Endothelial cell of umbilical vein (primary cell): ENCODE measurements at regions of chr2 and their contacts with region 1.

Region 1: DNA sequence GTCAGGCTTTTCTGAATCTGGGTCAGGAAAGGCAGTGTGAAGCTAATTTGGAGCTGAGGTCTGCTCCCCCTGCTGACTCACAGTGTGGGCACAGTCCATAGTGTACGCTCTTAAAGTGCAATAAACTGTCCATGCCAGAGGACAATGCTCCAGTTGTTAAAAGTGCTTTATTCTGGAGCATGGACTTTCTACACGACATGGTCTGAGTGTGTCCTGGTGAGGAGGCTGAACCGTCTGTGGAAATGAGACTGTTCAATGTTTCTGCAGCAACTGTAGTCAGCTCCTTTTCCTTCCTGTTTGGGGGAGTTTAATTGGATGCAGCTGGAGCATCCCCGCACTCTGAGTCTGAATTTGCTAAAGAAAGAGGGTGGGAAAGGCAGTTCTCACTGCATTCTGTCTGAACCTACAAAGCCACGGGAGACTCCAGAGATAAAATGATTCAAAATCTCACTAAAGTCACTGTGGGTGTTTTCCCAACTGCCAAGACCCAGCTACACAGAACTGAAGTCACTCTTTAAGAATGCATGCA is 110.2 kb upstream of the TRIB2 start:
- DNase-seq: peak; percentile 8
- H3K4me3 ChIP-seq: no peak overlapping the region
- H3K27ac ChIP-seq: no peak overlapping the region
- H3K4me1 ChIP-seq: no peaks in the 10 kb centered on the region
- H3K27me3 ChIP-seq: peaks cover 0 to 1% of the 10 kb centered on the region in 2 experiments
- CTCF ChIP-seq: no peak
- POLR2A ChIP-seq: no peak

Region 2: GRCh38 chr2:12577567-12578253 is 28.8 kb before region 1 on chr2:
- CTCF ChIA-PET with region 1: no interaction called
- POLR2A ChIA-PET with region 1: no interaction called
- dilution Hi-C with region 1: no loop called
- intact Hi-C with region 1: no loop called
- DNase-seq: no peak
- H3K4me3 ChIP-seq: no peak overlapping the region
- H3K27ac ChIP-seq: no peak overlapping the region
- H3K4me1 ChIP-seq: no peaks in the 10 kb centered on the region
- H3K27me3 ChIP-seq: no peaks in the 10 kb centered on the region
- CTCF ChIP-seq: no peak
- POLR2A ChIP-seq: no peak

Region 3: DNA sequence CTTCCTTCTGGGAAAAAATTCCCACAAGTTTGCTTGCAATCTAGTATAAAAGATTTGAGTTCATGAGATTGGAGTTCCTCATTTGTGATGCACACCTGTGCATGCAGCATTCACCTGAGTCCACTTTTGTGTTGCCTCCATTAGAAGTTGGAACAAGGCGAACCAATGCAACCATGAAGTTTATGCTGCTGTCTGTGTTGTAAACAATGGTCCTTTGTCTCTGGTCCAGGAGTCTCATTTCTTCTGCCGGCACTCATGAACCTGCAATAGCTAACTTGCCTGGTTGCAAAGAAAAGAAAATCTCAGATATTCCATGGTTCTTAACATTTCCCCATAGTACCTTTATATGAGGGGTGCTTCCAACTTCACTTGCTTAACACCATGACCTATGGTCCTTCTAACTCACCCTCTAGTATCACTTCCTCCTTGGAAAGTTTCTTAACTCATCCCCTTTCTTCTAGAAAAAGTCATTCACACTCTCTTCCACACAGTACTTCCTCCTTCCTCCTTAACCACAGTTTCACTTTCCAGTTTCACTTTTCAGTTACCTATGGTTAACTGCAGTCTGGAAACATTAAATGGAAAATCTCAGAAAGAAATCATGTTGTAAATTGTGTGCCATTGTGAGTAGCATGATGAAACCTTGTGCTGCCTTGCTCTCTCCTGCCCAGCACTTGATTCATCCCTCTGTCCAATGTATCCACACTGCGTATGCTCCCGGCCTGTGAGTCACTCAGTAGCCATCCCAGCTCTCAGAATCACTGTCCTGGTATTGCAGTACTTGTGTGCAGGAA is 18.6 kb before region 1 on chr2:
- CTCF ChIA-PET with region 1: interaction called, 3 read pairs
- POLR2A ChIA-PET with region 1: no interaction called
- dilution Hi-C with region 1: no loop called
- intact Hi-C with region 1: loop called (anchors 2 kb)
- DNase-seq: peak; percentile 22
- H3K4me3 ChIP-seq: no peak overlapping the region
- H3K27ac ChIP-seq: no peak overlapping the region
- H3K4me1 ChIP-seq: no peaks in the 10 kb centered on the region
- H3K27me3 ChIP-seq: no peaks in the 10 kb centered on the region
- CTCF ChIP-seq: no peak
- POLR2A ChIP-seq: no peak

Region 4: DNA sequence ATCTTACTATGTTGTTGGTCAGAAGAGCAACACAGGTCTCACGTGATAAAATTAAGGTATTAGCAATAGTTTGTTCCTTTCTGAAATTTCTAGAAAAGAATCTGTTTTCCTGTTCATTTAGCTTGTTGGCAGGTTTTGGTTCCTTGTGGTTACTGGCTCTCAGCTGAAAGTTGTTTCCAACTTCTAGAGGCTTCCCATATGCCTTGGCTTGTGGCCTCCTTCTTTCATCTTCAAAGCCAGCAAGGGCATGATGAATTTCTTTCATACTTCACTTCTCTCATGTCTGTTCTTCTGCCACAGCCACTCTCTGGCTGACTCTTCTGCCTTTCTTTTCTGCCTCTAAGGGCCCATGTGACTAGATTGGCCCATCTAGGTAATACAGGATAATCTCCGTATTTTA is 303.9 kb after region 1 on chr2:
- CTCF ChIA-PET with region 1: no interaction called
- POLR2A ChIA-PET with region 1: no interaction called
- dilution Hi-C with region 1: no loop called
- intact Hi-C with region 1: no loop called
- DNase-seq: no peak
- H3K4me3 ChIP-seq: no peak overlapping the region
- H3K27ac ChIP-seq: no peak overlapping the region
- H3K4me1 ChIP-seq: no peaks in the 10 kb centered on the region
- H3K27me3 ChIP-seq: no peaks in the 10 kb centered on the region
- CTCF ChIP-seq: no peak
- POLR2A ChIP-seq: no peak